ENCODE measurements at regions of chr5 and their contacts with region 1.

Region 1: DNA sequence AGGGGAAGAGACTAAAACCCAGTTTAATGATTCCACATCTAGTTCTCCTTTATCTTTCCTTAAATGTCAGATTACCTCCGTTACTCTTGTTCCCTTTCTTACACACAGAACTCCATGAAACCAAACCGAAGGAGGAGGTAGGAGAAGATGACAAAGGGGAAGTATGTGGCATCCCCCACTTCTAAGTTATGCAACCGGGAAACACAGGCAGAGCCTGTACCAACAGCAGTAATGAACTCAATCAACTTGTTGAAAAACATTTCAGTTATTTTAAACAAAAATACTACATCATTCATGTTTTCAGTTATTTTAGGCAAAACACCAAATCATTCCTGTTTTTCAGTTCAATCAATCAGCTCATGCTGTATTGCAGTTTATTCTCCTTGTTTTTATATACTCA is 101.8 kb downstream of the PCSK1 start:
- DNase-seq: no peak
- H3K4me3 ChIP-seq: no peak overlapping the region
- H3K4me3 Mint-ChIP-seq: no peak overlapping the region
- H3K27ac Mint-ChIP-seq: no peak overlapping the region
- H3K4me1 ChIP-seq: peaks cover 35% of the 10 kb centered on the region
- H3K4me1 Mint-ChIP-seq: peaks cover 29% of the 10 kb centered on the region
- H3K27me3 ChIP-seq: no peaks in the 10 kb centered on the region
- H3K27me3 Mint-ChIP-seq: no peaks in the 10 kb centered on the region
- CTCF ChIP-seq: no peak

Region 2: DNA sequence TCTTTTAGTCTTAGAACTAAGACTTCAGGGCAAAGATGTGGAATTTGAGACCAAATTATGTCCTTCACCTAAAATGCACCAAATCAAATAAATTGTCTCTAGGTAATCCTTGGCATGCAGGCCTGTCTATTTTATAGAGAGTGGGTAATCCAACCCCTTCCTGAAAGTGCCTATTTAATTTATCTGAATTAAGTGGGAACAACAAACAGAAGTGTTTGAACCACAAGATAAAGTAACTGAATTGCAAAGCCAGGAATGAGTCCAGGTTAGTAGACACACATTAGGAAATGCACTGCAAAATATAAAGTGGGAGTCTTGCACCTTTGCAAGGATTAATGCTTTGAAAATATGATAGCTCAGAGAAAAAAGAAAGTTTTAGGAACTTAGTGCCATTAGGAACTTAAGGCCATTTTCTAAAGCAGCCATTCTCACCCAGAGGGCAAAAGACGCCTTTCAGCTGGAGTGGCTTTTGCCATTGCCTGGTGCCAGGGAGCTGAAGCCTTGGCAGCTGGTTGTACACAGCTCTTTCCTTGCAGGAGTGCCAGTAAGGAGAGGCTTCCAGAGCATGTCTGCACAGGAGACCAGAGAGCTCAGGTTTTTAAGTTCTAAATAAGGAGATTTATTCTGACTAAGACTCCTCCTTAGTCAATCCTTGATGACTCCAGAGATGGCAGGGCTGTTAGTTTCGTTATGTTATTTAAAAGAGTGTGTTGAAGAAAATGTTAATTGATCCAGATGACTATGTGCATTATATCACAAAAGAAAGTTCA is 217.9 kb before region 1 on chr5:
- CTCF ChIA-PET with region 1: no interaction called
- POLR2A ChIA-PET with region 1: no interaction called
- intact Hi-C with region 1: loop called (anchors 5 kb)
- DNase-seq: no peak
- H3K4me3 ChIP-seq: no peak overlapping the region
- H3K4me3 Mint-ChIP-seq: no peak overlapping the region
- H3K27ac Mint-ChIP-seq: no peak overlapping the region
- H3K4me1 ChIP-seq: peaks cover 34% of the 10 kb centered on the region
- H3K4me1 Mint-ChIP-seq: peaks cover 23% of the 10 kb centered on the region
- H3K27me3 ChIP-seq: no peaks in the 10 kb centered on the region
- H3K27me3 Mint-ChIP-seq: no peaks in the 10 kb centered on the region
- CTCF ChIP-seq: no peak

Region 3: DNA sequence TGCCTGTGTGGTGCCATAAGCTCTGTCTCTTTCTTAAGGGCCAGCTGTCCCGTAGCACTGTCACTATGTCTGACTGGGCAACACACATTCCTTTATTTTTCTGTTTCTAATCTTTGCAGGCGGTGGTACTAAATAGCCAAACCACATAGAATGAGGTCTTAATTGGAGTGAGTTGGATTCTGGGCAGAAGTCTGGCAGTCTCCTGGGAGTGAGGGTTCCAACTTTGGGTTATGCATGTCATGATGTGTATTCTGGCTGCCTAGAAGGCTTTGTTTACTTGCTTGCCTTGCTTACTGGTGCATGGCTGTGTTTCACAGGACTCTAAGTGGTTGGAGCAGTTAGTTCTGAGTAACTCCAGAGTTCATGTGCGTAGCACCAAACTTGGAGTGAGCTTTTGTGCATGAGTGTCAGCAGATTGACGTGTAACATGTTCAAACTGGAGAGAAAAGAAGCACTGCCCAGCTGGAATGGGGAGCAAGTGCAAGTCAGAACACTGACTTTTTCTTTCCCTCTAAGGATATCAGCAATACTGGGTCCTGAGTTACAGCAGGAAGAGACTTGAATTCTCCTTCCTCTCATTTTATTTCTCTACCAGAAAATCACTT is 84.0 kb before region 1 on chr5:
- CTCF ChIA-PET with region 1: interaction called, 3 read pairs
- POLR2A ChIA-PET with region 1: no interaction called
- intact Hi-C with region 1: loop called (anchors 5 kb)
- DNase-seq: no peak
- H3K4me3 ChIP-seq: no peak overlapping the region
- H3K4me3 Mint-ChIP-seq: no peak overlapping the region
- H3K27ac Mint-ChIP-seq: no peak overlapping the region
- H3K4me1 ChIP-seq: peaks cover 25% of the 10 kb centered on the region
- H3K4me1 Mint-ChIP-seq: peaks cover 26% of the 10 kb centered on the region
- H3K27me3 ChIP-seq: no peaks in the 10 kb centered on the region
- H3K27me3 Mint-ChIP-seq: no peaks in the 10 kb centered on the region
- CTCF ChIP-seq: no peak

Region 4: DNA sequence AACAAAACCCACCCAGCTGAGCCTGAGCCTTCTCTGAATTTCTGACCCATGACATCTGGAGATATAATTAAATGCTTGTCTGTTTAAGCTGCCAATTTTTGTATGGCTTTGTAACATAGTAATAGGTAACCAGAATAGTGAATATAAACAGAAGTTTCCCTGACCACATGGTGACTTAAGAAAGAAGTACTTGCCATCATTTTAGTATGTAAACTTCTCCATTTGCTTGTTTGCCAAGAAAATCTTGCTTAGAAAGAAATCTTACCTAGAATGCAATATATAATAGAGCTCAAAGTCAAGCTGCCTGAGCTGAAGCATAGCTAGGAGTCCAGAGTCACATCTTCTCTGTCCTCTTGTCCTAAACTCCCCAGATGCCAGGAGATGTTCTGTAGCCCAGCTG is 15.2 kb before region 1 on chr5:
- CTCF ChIA-PET with region 1: no interaction called
- POLR2A ChIA-PET with region 1: no interaction called
- intact Hi-C with region 1: loop called (anchors 2 kb)
- DNase-seq: no peak
- H3K4me3 ChIP-seq: no peak overlapping the region
- H3K4me3 Mint-ChIP-seq: no peak overlapping the region
- H3K27ac Mint-ChIP-seq: no peak overlapping the region
- H3K4me1 ChIP-seq: no peaks in the 10 kb centered on the region
- H3K4me1 Mint-ChIP-seq: peaks cover 7% of the 10 kb centered on the region
- H3K27me3 ChIP-seq: no peaks in the 10 kb centered on the region
- H3K27me3 Mint-ChIP-seq: no peaks in the 10 kb centered on the region
- CTCF ChIP-seq: no peak

Region 5: DNA sequence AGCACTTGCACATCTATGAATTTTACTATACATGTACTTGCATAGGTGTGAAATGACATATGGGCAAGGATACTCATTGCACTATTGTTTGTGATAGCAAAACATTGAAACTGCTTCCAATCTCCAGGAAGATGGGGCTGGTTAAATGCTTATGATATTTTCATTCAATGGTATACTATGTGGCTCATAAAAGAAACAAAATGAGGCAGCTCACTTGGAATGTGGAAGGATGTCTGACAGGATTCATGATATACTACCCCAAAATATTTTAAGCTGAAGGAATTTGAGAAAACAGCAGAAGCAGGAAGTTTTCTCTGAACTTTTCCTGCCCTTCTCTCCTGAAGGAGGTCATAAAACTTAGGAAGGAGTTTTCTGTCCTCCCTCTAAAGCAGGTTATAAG is 231.4 kb after region 1 on chr5:
- CTCF ChIA-PET with region 1: no interaction called
- POLR2A ChIA-PET with region 1: no interaction called
- intact Hi-C with region 1: no loop called
- DNase-seq: no peak
- H3K4me3 ChIP-seq: no peak overlapping the region
- H3K4me3 Mint-ChIP-seq: no peak overlapping the region
- H3K27ac Mint-ChIP-seq: no peak overlapping the region
- H3K4me1 ChIP-seq: no peaks in the 10 kb centered on the region
- H3K4me1 Mint-ChIP-seq: no peaks in the 10 kb centered on the region
- H3K27me3 ChIP-seq: peaks cover 2% of the 10 kb centered on the region; the same call in 1 of the 2 replicates
- H3K27me3 Mint-ChIP-seq: peaks cover 15% of the 10 kb centered on the region
- CTCF ChIP-seq: no peak

Measured in Caco-2 (cell line).